ENCODE measurements at regions of chr10 and their contacts with region 1.

Region 1: DNA sequence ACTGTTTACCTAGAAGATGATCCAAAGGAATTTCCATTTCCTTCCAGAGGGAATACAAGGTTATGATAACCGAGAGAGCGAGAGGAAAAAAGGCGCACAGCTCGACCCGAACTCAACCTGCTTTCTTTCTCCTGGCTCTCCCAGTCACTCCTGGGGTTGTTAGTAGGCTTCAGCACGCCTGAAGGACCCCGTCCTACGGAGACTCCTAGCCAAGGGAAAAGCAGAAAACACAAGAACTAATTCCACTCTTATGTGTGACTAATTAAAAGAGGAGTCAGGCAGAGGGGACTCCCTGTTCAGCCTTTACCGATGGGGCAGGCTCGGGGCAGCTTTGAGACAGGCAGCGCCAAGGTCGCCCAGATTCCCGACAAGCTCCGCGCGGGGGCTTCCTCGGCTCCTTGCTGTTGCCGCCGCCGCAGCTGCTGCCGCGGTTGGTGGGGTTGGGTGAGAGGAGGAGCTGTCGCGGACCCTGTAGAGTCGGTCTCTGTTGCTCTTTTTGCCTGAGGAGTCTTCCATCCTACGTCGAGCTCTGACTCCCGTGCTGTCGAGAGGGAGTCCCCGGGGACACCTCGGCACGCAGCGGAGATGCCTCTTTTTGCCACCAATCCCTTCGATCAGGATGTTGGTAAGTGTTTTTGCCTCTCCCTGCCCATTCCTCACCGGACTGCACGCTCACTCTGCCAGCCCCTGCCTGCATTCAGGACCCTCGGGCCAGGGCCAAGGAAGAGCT is at the start of gene STAM:
- DNase-seq: peak; percentile 84
- H3K4me3 ChIP-seq: peak within 1 kb of the TSS; percentile 98
- H3K27ac ChIP-seq: peak within 1 kb of the TSS; percentile 98
- H3K27me3 ChIP-seq: no peaks in the 10 kb centered on the region
- CTCF ChIP-seq: no peak
- polyA plus RNA-seq, gene STAM: 31.3 and 43.6 TPM in 2 replicates

Region 2: DNA sequence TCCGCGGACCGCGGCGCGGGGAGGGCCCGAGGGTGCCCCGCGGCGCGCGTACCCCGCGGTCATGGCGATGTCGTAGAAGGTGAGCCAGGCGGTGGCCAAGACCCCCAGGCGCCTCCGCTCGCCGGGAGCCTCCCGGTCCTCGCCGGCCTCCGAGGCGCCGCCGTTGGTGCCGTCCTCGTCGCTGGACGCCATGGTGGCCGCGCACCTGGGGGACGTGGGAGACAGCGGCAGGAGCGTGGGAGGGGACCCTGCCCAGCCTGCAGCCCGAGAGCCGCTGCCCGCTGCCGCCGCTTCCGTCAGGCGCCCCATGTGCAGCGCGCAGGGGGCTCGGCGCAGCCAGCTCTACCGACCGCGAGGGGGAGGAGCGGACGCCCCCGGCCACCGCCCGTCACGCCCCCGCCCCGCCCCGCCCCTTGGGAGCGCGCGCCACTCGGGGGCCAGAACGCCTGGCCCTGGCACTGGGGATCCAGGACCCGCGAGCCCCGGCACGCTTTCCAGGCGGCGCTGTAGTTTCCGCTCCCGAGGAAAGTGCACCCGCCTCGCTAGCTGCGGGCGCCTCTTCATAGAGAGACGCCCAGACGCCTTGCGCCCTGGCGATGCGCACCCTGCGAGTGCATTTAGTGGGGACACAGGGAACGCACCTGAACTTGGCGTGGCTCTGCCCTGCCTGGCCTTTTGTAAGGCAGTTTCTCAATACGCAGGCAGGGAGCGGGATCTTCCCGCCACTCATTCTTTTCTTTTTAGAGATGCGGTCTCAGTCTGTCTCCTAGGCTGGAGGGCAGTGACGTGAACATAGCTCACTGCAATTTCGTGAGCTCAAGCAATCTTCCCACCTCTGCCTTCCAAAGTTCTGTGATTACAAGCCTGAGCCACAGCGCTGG is 26.6 kb before region 1 on chr10 and contains the start of gene HACD1:
- CTCF ChIA-PET with region 1: interaction called, 4 read pairs
- POLR2A ChIA-PET with region 1: interaction called, 30 read pairs
- DNase-seq: peak; percentile 8
- H3K4me3 ChIP-seq: peak within 1 kb of the TSS; percentile 79
- H3K27ac ChIP-seq: peak within 1 kb of the TSS; percentile 31
- H3K27me3 ChIP-seq: no peaks in the 10 kb centered on the region
- CTCF ChIP-seq: peak; percentile 37; the same call in 1 of the 2 replicates
- polyA plus RNA-seq, gene HACD1: 42.0 and 53.7 TPM in 2 replicates

Region 3: DNA sequence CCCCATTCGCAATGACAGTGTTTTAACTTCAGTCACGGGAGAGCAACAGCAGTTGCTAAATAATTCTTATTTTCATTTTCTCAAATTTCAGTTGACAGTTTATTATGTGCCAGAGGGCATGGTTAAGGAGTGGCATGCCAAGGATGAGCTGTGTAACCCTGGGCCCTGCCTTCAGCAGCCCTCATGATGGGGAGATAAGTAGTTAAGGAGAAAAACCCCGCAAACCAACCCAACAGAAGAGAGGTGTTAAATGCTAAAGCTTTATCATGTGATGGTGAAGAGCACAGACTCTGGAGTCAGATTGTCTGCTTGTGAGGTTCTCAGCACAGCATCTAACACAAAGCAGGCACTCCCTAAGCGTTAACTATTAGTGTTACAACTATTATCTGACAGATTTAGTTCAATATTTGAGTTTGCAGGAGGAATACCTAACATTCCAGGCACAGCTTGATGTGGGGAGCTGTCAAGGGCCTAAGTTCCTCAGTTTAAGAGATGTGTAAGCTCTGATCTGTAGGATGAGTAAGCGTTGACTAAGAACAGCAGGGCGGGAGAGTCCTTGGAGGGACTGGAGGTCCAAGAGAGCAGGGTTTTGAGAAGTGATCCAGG is 29.6 kb after region 1 on chr10:
- CTCF ChIA-PET with region 1: no interaction called
- POLR2A ChIA-PET with region 1: interaction called, 23 read pairs
- DNase-seq: peak; percentile 78
- H3K4me3 ChIP-seq: no peak overlapping the region
- H3K27ac ChIP-seq: peak overlapping the region; percentile 76
- H3K27me3 ChIP-seq: no peaks in the 10 kb centered on the region
- CTCF ChIP-seq: no peak

Region 4: GRCh38 chr10:18381679-18382078 is 737.8 kb after region 1 on chr10:
- CTCF ChIA-PET with region 1: no interaction called
- POLR2A ChIA-PET with region 1: interaction called, 11 read pairs
- DNase-seq: no peak
- H3K4me3 ChIP-seq: no peak overlapping the region
- H3K27ac ChIP-seq: no peak overlapping the region
- H3K27me3 ChIP-seq: no peaks in the 10 kb centered on the region
- CTCF ChIP-seq: no peak